ENCODE measurements at regions of chr1 and their contacts with region 1.

Region 1: GRCh38 chr1:34844252-34844634 is 15.3 kb downstream of the SMIM12 start:
- DNase-seq: peak; percentile 83
- ATAC-seq: no peak
- H3K4me3 ChIP-seq: no peak overlapping the region
- H3K27ac ChIP-seq: no peak overlapping the region
- H3K4me1 ChIP-seq: peaks cover 51% of the 10 kb centered on the region
- H3K27me3 ChIP-seq: peaks cover under 1 to 6% of the 10 kb centered on the region in 2 experiments; a peak in 1 of 5 replicates
- CTCF ChIP-seq: no peak
- EP300 ChIP-seq: no peak
- POLR2A ChIP-seq: no peak
- RAD21 ChIP-seq: no peak

Region 2: GRCh38 chr1:34859446-34860200 is 15.4 kb after region 1 on chr1 and contains the start of gene SMIM12:
- CTCF ChIA-PET with region 1: no interaction called
- POLR2A ChIA-PET with region 1: interaction called, 13 read pairs
- in situ Hi-C with region 1: no loop called
- intact Hi-C with region 1: no loop called
- DNase-seq: peak; percentile 91
- ATAC-seq: peak; percentile 99
- H3K4me3 ChIP-seq: peak within 1 kb of the TSS; percentile 83 to 92 (median 89)
- H3K27ac ChIP-seq: peak within 1 kb of the TSS; percentile 73
- H3K4me1 ChIP-seq: peaks cover 24% of the 10 kb centered on the region
- H3K27me3 ChIP-seq: peaks cover 0 to 3% of the 10 kb centered on the region in 2 experiments; a peak in 1 of 5 replicates
- CTCF ChIP-seq: peak; percentile 95
- EP300 ChIP-seq: no peak; a peak in 1 of 4 replicates
- POLR2A ChIP-seq: peak; percentile 85 to 96
- RAD21 ChIP-seq: 0 out of 2 replicates have a peak, but pooled peaks have one; percentile 38
- total RNA-seq, gene SMIM12: 41.3 and 42.9 TPM in 2 replicates

Region 3: GRCh38 chr1:34896613-34897012 is 52.4 kb after region 1 on chr1:
- CTCF ChIA-PET with region 1: no interaction called
- POLR2A ChIA-PET with region 1: no interaction called
- in situ Hi-C with region 1: no loop called
- intact Hi-C with region 1: no loop called
- DNase-seq: no peak
- ATAC-seq: no peak
- H3K4me3 ChIP-seq: no peak overlapping the region
- H3K27ac ChIP-seq: no peak overlapping the region
- H3K4me1 ChIP-seq: peaks cover under 1% of the 10 kb centered on the region; the same call in 1 of the 2 replicates
- H3K27me3 ChIP-seq: peaks cover 2 to 24% of the 10 kb centered on the region in 2 experiments; a peak in 4 of 5 replicates
- CTCF ChIP-seq: 0 out of 2 replicates have a peak, but pooled peaks have one; percentile 22
- EP300 ChIP-seq: no peak
- POLR2A ChIP-seq: no peak
- RAD21 ChIP-seq: no peak